ENCODE measurements at regions of chr17 and their contacts with region 1.

Region 1: DNA sequence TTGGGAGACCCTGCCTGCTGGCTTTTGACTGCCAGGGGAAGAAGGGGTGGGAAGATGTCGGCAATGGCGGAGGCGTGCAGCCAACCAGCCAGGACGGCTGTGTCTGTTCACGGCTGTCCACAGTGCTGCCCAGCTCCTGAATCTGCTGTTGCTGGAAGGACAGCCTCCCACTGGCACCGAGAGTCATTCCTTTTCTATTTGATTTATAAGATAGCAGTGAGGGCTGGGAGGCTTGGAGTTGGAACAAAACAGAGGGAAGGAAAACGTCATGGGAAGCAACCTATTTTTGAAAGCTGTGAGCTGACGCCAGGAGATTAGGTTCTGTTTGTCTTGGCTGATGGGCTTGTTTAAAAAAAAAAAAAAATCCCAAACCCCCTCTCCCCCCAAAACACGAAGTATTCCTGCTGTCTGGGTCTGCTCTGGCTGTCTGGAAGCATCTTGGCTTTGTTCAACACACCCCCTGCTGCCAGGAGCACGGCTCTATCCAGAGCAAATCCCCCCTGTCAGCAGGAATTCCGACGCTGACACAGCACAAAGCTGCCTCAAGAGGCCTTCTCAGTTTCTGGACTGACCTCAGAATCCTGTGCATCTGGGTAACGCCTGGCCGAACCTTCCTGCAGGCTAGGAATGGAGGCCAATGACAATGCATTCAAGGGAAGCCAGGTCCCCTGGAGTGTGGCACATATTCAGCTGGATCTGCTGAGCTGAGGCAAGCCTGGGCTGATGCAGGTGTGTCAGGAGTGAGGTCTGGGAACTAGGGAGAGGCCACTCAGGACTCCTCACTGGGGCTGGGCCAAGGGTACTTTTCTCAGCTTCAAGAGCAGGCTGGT is 41.0 kb upstream of the SREBF1 start:
- DNase-seq: peak; percentile 87
- ATAC-seq: peak; percentile 85

Region 2: DNA sequence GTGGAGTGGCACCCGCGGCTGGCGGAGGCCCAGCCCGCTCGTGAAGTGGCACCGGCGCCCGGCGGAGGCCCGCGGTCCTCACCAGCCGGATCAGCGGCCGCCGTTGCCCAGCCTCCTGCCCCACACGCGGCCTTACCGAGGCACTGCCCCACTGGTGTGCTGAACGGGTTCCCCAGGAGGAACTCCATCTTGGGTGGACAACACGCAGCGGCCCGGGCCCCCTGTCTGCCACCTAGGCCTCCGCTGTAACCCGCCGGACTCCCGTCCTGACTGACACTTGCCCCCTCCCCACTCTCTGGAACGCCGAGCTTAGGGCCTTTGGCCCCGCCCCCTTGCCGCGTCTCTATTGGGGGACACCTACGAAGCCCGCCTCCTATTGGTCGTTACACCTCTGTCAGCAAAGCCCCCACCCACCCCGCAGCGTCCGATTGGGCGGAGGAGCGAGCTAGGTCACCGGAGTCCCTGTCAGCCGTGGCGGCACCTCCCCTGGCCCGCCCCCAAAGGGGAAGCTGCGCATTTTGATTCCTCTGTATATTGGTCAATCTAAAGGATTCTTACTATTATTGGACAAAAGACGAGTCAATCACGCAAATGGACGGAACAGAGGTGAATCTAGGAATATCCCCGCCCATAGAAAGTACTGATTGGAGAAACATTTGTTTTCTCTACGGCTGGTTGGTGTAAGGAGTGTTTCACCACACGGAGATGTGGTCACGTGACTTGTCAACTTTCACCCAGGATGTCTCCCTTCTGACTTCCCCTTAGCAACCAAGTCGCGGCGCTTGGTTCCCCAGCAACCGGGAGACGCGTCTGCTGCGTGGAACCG is 94.6 kb after region 1 on chr17 and contains the starts of genes DRC3 and TOM1L2:
- intact Hi-C with region 1: loop called (anchors 5 kb)
- DNase-seq: peak; percentile 100
- ATAC-seq: peak; percentile 98
- total RNA-seq, gene DRC3: 1.6 TPM
- total RNA-seq, gene TOM1L2: 246 TPM